GM12878 (cell line): ENCODE measurements at regions of chr2 and their contacts with region 1.

Region 1: GRCh38 chr2:26492749-26493515 is 15.0 kb upstream of the OTOF start:
- DNase-seq: no peak
- ATAC-seq: peak; percentile 24; the same call in 1 of the 3 replicates
- H3K4me3 ChIP-seq: no peak overlapping the region
- H3K27ac ChIP-seq: peak overlapping the region; percentile 20
- H3K4me1 ChIP-seq: peaks cover 15% of the 10 kb centered on the region
- H3K27me3 ChIP-seq: no peaks in the 10 kb centered on the region; a peak in 1 of 4 replicates
- CTCF ChIP-seq: no peak
- EP300 ChIP-seq: no peak
- POLR2A ChIP-seq: no peak
- RAD21 ChIP-seq: no peak

Region 2: GRCh38 chr2:26503231-26503880 is 10.4 kb after region 1 on chr2:
- CTCF ChIA-PET with region 1: interaction called, 10 read pairs
- POLR2A ChIA-PET with region 1: no interaction called
- RAD21 ChIA-PET with region 1: no interaction called
- SMC1A ChIA-PET with region 1: no interaction called
- in situ Hi-C with region 1: no loop called
- intact Hi-C with region 1: no loop called
- DNase-seq: no peak
- ATAC-seq: peak; percentile 98
- H3K4me3 ChIP-seq: peak overlapping the region; percentile 42; the same call in 1 of the 2 replicates
- H3K27ac ChIP-seq: no peak overlapping the region
- H3K4me1 ChIP-seq: no peaks in the 10 kb centered on the region; the same call in 1 of the 2 replicates
- H3K27me3 ChIP-seq: peaks cover 0 to 7% of the 10 kb centered on the region in 2 experiments; a peak in 3 of 4 replicates
- CTCF ChIP-seq: peak; percentile 75 to 88 (median 88)
- EP300 ChIP-seq: no peak
- POLR2A ChIP-seq: peak; percentile 48; the same call in 1 of the 2 replicates
- RAD21 ChIP-seq: peak; percentile 11; the same call in 1 of the 2 replicates